ENCODE measurements at regions of chr7 and their contacts with region 1.

Region 1: DNA sequence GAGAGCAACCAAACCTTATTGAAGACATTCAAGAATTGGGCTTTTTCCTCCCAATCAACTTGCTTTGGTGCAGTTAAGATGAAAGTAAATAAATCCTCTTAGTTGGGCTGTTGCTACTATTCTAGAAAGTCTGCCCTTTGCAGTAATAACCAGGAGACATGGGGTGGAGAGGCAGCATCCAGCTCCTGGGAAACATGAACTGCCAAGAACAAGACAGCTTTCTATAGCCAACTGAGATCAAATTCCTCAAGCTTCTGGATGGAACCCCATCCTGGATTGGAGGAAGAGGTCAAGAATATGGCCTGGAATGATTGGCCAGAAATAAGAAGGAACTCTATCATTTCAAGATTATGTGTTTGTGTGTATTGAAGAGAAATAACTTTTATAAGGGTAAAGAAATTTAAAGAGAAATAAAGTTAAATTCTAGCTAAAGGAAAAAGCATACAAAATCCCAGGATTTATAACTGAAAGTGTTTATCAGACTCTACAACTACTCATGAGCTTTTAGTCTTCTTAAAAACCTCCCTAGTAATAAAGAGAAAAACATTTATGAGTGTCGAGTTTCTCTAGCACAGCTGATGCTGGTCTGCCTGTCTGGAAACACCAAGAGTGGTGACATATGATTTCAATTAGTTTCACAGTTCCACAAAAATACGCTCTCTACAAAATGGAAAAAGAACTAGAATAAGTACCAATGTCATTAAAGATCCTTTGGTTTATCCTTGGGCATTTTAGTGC is 70.1 kb upstream of the COL1A2 start:
- DNase-seq: no peak
- H3K4me3 ChIP-seq: no peak overlapping the region
- H3K27me3 ChIP-seq: no peaks in the 10 kb centered on the region
- CTCF ChIP-seq: no peak

Region 2: DNA sequence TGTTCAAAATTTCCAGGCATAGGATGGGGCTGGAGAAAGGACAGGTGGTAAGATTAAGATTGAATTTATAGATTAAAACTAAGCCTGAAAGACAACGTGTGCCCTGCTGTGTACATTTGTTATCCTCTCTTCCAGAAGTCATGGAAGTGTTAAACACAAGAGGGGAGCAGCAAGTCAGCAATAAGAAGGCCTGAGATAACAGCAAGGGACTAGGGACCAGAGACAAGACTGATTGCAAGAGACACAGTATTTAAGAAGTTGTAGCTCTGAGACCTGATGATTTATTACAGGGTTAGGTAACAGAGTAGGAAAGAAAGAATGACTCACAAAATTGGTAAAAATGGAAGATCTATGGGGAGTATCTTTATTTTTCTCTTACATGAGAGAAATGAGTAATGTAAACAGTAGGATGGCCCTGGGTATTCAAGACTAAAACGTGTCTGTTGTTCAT is 14.4 kb after region 1 on chr7:
- CTCF ChIA-PET with region 1: interaction called, 4 read pairs
- POLR2A ChIA-PET with region 1: interaction called, 15 read pairs
- DNase-seq: peak; percentile 44
- H3K4me3 ChIP-seq: no peak overlapping the region
- H3K27me3 ChIP-seq: no peaks in the 10 kb centered on the region; the same call in 1 of the 2 replicates
- CTCF ChIP-seq: no peak

Region 3: DNA sequence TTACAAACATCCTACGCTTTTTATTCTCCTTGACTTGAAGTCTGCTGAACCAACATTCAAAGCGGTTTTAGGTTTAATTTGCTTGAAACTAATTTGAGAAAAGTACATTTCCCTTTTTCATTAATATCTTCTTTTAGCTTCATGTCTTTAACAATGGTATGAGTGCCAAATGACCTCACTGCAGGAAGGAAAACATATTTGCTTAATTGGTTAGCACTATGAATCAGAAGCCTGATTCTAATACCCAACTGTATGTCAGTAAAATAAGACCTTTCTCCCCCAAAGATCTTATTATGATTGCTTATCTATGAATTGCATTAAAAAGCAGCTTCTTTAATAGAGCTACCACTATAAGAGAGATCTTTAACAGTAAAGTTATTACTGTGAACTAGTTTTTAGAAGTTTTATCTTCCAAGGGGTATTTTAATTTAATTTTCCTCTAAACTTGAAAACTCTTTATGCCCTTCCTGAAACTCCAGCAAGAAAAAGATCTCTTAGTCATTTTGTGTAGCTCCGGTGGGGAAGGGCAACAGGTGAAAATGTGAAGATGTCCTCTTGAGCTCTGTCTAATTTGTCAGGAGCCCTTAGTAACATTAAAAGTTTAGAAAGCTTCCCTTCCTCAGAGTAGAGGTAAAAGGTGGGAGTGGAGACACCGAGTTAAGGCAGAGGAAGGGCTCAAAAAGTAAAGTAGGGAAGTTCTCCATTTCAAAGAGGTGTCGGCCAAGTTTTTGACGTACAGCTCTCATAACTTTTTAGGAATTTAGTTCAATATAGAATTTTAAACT is 76.3 kb after region 1 on chr7:
- CTCF ChIA-PET with region 1: no interaction called
- POLR2A ChIA-PET with region 1: interaction called, 12 read pairs
- DNase-seq: no peak
- H3K4me3 ChIP-seq: peak overlapping the region; percentile 67
- H3K27me3 ChIP-seq: no peaks in the 10 kb centered on the region
- CTCF ChIP-seq: no peak